Left colon (tissue), 2 donors: ENCODE measurements at regions of chr13 and their contacts with region 1.

Region 1: GRCh38 chr13:44271031-44271433 is 102.6 kb upstream of the SERP2 start:
- DNase-seq: no peak
- ATAC-seq: no peak

Region 2: GRCh38 chr13:44231786-44232516 is 39.1 kb before region 1 on chr13:
- intact Hi-C with region 1: loop called in 1 of 2 experiments (anchors 2 kb)
- DNase-seq: peak; percentile 39 to 89
- ATAC-seq: peak; percentile 77

Region 3: GRCh38 chr13:44422755-44423532 is 151.9 kb after region 1 on chr13:
- intact Hi-C with region 1: no loop called
- DNase-seq: no peak
- ATAC-seq: no peak